Activated CD8-positive, alpha-beta memory T cell treated with anti-CD3 and anti-CD28 coated beads, Interleukin-2, amount 10 ng/mL, durations not matched to agents 7 days and 5 days (primary cell): ENCODE measurements at regions of chr22 and their contacts with region 1.

Region 1: GRCh38 chr22:37498289-37498909 is 12.2 kb upstream of the MFNG start:
- DNase-seq: peak; percentile 78
- ATAC-seq: peak; percentile 96
- H3K4me3 Mint-ChIP-seq: no peak overlapping the region
- H3K27ac Mint-ChIP-seq: no peak overlapping the region
- H3K4me1 Mint-ChIP-seq: peaks cover 14% of the 10 kb centered on the region
- H3K27me3 Mint-ChIP-seq: peaks cover 5% of the 10 kb centered on the region

Region 2: DNA sequence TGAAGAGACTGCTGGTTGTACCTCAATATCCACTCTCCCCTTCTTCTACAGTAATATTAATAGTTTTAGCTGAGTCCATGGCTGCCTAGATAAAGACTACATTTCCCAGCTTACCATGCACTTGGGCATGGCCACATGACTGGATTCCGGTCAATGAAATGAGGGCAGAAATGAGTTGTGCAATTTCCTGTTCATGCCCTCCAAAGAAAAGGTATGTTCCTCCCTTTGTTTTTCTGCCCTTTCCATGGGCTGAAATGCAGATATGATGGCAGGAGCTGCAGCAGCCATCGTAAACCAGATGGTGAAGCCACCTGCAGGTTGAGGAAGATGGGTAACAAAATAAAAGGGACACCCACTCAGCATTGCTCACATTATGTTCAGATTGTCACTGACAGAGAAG is 55.9 kb before region 1 on chr22:
- CTCF ChIA-PET with region 1: no interaction called
- DNase-seq: no peak
- ATAC-seq: no peak
- H3K4me3 Mint-ChIP-seq: no peak overlapping the region
- H3K27ac Mint-ChIP-seq: no peak overlapping the region
- H3K4me1 Mint-ChIP-seq: peaks cover 6% of the 10 kb centered on the region
- H3K27me3 Mint-ChIP-seq: peaks cover 12% of the 10 kb centered on the region

Region 3: GRCh38 chr22:37486224-37486845 is 12.1 kb before region 1 on chr22 and contains the start of gene MFNG:
- CTCF ChIA-PET with region 1: interaction called, 11 read pairs
- DNase-seq: peak; percentile 83
- ATAC-seq: peak; percentile 66
- H3K4me3 Mint-ChIP-seq: peak within 1 kb of the TSS; percentile 94
- H3K27ac Mint-ChIP-seq: peak within 1 kb of the TSS; percentile 88
- H3K4me1 Mint-ChIP-seq: peaks cover 47% of the 10 kb centered on the region
- H3K27me3 Mint-ChIP-seq: no peaks in the 10 kb centered on the region
- total RNA-seq, gene MFNG: 196 to 220 TPM

Region 4: GRCh38 chr22:37525073-37525748 is 26.8 kb after region 1 on chr22:
- CTCF ChIA-PET with region 1: no interaction called
- DNase-seq: no peak
- ATAC-seq: no peak
- H3K4me3 Mint-ChIP-seq: no peak overlapping the region
- H3K27ac Mint-ChIP-seq: no peak overlapping the region
- H3K4me1 Mint-ChIP-seq: peaks cover 13% of the 10 kb centered on the region
- H3K27me3 Mint-ChIP-seq: peaks cover 37% of the 10 kb centered on the region